Activated T-helper 1 cell treated with anti-CD3 and anti-CD28 coated beads, Interleukin-12 subunit alpha, Interleukin-12 subunit beta, Interleukin-2, Interleukin-4 antibody, amounts not matched to agents 30 ng/mL and 10 ng/mL and 1 ng/mL, durations not matched to agents 14 hours and 24 hours and 36 hours (primary cell): ENCODE measurements at regions of chr2 and their contacts with region 1.

Region 1: GRCh38 chr2:199979832-199980628 is 24.6 kb downstream of the MAIP1 start:
- DNase-seq: peak; percentile 62
- H3K4me3 Mint-ChIP-seq: no peak overlapping the region
- H3K27ac Mint-ChIP-seq: no peak overlapping the region
- H3K4me1 Mint-ChIP-seq: peaks cover 28% of the 10 kb centered on the region
- H3K27me3 Mint-ChIP-seq: no peaks in the 10 kb centered on the region

Region 2: DNA sequence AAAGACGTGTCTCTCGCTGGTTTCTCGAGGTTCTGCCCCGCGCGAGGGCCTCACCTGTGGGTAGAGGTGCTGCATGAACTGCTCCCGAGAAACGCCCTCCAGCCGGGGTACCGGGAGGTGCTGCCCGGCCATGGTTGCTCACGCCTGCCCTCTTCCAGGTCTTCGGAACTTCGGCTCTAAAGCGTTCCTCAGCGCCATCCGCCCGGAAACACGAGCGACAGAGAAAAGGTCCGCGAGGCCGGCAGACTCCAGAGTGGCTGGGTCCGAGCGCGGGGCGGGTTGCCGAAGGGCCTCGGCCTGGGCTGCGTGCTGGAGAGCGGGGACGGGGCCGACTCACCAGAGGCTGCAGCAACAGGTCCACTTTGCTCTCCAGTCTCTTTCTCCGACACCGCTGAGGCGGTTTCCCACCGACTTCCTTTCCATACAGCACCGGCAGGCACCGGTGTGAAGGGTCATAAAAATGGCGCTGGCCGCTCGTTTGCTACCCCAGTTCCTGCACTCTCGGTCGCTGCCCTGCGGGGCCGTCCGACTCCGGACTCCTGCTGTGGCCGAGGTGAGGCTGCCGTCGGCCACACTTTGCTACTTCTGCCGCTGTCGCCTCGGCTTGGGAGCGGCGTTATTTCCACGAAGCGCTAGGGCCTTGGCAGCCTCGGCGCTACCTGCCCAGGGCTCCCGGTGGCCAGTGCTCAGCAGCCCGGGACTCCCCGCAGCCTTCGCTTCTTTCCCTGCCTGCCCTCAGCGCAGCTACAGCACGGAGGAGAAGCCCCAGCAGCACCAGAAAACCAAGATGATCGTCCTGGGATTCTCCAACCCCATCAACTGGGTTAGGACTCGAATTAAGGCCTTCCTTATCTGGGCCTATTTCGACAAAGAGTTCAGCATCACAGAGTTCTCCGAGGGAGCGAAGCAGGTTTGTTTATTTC is 24.4 kb before region 1 on chr2 and contains the starts of genes MAIP1 and TYW5:
- intact Hi-C with region 1: loop called (anchors 2 kb)
- DNase-seq: peak; percentile 73
- H3K4me3 Mint-ChIP-seq: peak within 1 kb of the TSS; percentile 99
- H3K27ac Mint-ChIP-seq: peak within 1 kb of the TSS; percentile 93
- H3K4me1 Mint-ChIP-seq: peaks cover 62% of the 10 kb centered on the region
- H3K27me3 Mint-ChIP-seq: no peaks in the 10 kb centered on the region
- total RNA-seq, gene MAIP1: 24.7 and 27.1 TPM in 2 replicates
- total RNA-seq, gene TYW5: 11.7 and 13.9 TPM in 2 replicates

Region 3: DNA sequence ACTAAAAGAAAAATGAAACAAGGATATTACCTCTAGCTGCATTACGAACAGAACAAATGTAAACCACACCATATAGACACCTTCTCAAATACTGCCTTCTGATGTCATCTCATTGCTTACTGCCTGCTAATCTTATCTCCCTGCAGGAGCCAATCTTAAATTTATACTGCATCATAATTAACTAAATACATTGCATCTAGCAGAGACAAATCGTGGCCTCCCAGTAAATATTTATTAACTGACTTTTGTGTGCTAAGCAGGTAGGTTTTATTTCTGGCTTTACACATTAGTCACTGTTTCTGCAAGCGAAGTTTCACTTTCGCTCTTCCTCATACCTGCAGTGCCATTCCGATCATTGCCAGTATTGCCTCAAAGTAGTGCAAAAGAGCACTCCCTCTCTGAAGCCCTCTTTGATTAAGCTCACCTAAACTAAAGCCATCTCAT is 394.0 kb after region 1 on chr2:
- intact Hi-C with region 1: loop called (anchors 5 kb)
- DNase-seq: peak; percentile 49
- H3K4me3 Mint-ChIP-seq: peak overlapping the region; percentile 79
- H3K27ac Mint-ChIP-seq: peak overlapping the region; percentile 86
- H3K4me1 Mint-ChIP-seq: peaks cover 55% of the 10 kb centered on the region
- H3K27me3 Mint-ChIP-seq: no peaks in the 10 kb centered on the region

Region 4: GRCh38 chr2:200483729-200484198 is 503.7 kb after region 1 on chr2:
- intact Hi-C with region 1: loop called (anchors 1 kb)
- DNase-seq: no peak
- H3K4me3 Mint-ChIP-seq: no peak overlapping the region
- H3K27ac Mint-ChIP-seq: no peak overlapping the region
- H3K4me1 Mint-ChIP-seq: peaks cover 7% of the 10 kb centered on the region
- H3K27me3 Mint-ChIP-seq: no peaks in the 10 kb centered on the region

Region 5: GRCh38 chr2:200578778-200579177 is 598.7 kb after region 1 on chr2:
- intact Hi-C with region 1: loop called (anchors 1 kb)
- DNase-seq: no peak
- H3K4me3 Mint-ChIP-seq: no peak overlapping the region
- H3K27ac Mint-ChIP-seq: no peak overlapping the region
- H3K4me1 Mint-ChIP-seq: peaks cover 18% of the 10 kb centered on the region
- H3K27me3 Mint-ChIP-seq: no peaks in the 10 kb centered on the region